Panc1 (cell line): ENCODE measurements at regions of chr17 and their contacts with region 1.

Region 1: DNA sequence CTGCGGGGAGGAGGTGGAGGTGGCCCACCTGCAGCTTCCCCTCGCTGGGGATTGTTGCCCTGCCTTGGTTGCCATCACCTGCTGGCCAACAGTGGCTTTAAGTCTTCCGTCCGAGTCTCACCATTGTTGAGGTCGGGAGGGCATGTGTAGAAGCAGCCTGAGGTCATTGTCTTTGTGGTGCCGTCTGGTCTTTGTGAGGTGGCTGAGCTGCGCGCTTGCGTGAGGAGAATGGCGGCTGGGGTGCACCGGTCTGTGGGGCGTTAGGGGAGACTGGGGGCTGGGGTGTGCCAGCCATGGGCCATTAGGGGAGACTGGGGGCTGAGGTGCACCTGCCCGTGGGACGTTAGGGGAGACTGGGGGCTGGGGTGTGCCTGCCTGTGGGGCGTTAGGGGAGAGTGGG is 36.2 kb downstream of the ZNF750 start:
- DNase-seq: no peak
- ATAC-seq: no peak
- H3K4me3 ChIP-seq: no peak overlapping the region
- H3K27ac ChIP-seq: no peak overlapping the region
- H3K4me1 ChIP-seq: no peaks in the 10 kb centered on the region
- H3K27me3 ChIP-seq: no peaks in the 10 kb centered on the region
- CTCF ChIP-seq: no peak

Region 2: DNA sequence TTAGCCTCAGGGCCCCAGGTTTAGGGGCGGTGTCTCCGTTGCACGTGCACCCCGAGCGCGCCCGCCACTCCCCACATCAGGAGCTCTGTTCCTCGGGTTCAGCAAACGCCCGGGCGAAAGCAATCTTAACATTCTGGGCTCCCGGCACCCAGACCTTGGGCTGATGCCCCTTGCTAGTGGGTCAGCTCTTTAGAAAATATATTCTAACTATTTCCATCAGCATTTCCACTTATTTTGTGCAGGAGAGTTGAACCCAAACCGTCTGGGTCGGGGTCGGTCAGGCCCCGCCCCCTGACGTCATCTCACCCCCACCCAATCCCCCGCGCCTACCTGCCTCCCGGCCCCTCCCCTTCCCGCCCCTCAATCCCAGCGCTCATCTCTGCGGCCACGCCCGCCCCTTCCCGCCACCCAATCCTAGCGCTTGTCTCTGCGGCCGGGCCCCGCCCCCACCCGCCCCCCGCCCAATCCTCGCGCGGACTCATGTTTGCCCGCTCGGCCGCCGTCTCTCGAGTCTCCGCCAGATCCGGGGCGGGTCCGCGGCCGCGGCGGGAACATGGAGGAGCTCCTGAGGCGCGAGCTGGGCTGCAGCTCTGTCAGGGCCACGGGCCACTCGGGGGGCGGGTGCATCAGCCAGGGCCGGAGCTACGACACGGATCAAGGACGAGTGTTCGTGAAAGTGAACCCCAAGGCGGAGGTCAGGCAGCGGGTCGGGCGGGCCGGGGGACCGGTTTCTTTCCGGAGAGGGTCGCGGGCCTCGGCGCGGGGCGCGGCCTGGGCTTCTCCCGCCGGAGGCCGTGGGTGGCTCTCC is 87.2 kb before region 1 on chr17 and contains the start of gene FN3KRP:
- CTCF ChIA-PET with region 1: no interaction called
- POLR2A ChIA-PET with region 1: no interaction called
- in situ Hi-C with region 1: no loop called
- intact Hi-C with region 1: no loop called
- DNase-seq: peak; percentile 55
- ATAC-seq: peak; percentile 93
- H3K4me3 ChIP-seq: peak within 1 kb of the TSS; percentile 79 to 91
- H3K27ac ChIP-seq: peak within 1 kb of the TSS; percentile 74
- H3K4me1 ChIP-seq: peaks cover 3% of the 10 kb centered on the region; the same call in 1 of the 2 replicates
- H3K27me3 ChIP-seq: no peaks in the 10 kb centered on the region
- CTCF ChIP-seq: no peak
- total RNA-seq, gene FN3KRP: 41.0 TPM

Region 3: GRCh38 chr17:83083323-83084201 is 280.0 kb after region 1 on chr17:
- CTCF ChIA-PET with region 1: no interaction called
- POLR2A ChIA-PET with region 1: interaction called, 14 read pairs
- in situ Hi-C with region 1: no loop called
- intact Hi-C with region 1: no loop called
- DNase-seq: no peak
- ATAC-seq: no peak
- H3K4me3 ChIP-seq: no peak overlapping the region
- H3K27ac ChIP-seq: no peak overlapping the region
- H3K4me1 ChIP-seq: peaks cover 10% of the 10 kb centered on the region
- H3K27me3 ChIP-seq: no peaks in the 10 kb centered on the region
- CTCF ChIP-seq: no peak